IMR-90 (cell line): ENCODE measurements at regions of chr3 and their contacts with region 1.

Region 1: GRCh38 chr3:88058591-88059368 is at the starts of genes CGGBP1 and ZNF654:
- DNase-seq: peak; percentile 99
- ATAC-seq: peak; percentile 96
- H3K4me3 ChIP-seq: peak within 1 kb of the TSS; percentile 98
- H3K27ac ChIP-seq: peak within 1 kb of the TSS; percentile 99
- H3K4me1 ChIP-seq: 0 out of 2 replicates have a peak, but pooled peaks cover 1% of the 10 kb centered on the region
- H3K27me3 ChIP-seq: no peaks in the 10 kb centered on the region
- CTCF ChIP-seq: no peak
- POLR2A ChIP-seq: peak; percentile 90
- RAD21 ChIP-seq: no peak
- total RNA-seq, gene CGGBP1: 37.8 and 42.1 TPM in 2 replicates
- total RNA-seq, gene ZNF654: 11.5 and 21.1 TPM in 2 replicates

Region 2: DNA sequence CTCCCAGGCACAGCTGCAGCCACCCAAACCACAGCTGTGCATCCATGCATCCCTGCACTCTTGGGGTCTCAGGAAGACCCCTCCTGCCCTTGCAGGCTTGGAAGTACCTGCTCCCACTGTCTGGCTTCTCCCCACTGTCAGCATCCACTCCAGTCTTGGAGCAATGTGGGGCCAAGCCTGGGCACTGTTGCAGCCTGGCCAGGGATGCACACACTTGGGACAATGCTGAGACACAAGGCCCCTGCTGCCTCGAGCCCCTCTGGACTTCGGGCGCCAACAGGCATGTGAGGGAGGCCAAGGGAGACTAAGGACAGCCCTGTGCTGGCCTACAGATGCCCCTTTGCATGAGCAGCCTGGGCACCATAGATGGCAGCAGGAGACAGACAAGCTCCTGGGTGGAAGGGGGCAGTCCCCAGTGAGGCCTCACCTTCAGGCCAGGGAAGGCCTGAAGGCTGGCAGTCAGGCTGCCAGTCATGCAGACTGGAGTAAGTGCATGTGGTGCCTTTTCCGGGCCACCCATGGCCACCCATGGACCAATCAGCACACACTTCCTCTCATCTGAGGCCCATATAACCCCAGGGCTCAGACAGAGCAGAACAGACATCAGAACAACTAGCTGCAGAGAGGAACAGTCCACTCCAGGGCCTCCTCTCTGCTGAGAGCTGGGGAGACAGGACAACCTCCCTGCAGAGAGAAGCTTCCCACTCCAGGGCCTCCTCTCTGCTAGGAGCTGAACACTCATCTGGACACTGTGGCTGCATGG is 1286.9 kb before region 1 on chr3:
- CTCF ChIA-PET with region 1: no interaction called
- POLR2A ChIA-PET with region 1: no interaction called
- dilution Hi-C with region 1: no loop called
- in situ Hi-C with region 1: no loop called
- intact Hi-C with region 1: no loop called
- DNase-seq: no peak
- ATAC-seq: peak; percentile 49
- H3K4me3 ChIP-seq: no peak overlapping the region
- H3K27ac ChIP-seq: no peak overlapping the region
- H3K4me1 ChIP-seq: no peaks in the 10 kb centered on the region
- H3K27me3 ChIP-seq: peaks cover 2% of the 10 kb centered on the region
- CTCF ChIP-seq: no peak
- POLR2A ChIP-seq: no peak
- RAD21 ChIP-seq: no peak

Region 3: DNA sequence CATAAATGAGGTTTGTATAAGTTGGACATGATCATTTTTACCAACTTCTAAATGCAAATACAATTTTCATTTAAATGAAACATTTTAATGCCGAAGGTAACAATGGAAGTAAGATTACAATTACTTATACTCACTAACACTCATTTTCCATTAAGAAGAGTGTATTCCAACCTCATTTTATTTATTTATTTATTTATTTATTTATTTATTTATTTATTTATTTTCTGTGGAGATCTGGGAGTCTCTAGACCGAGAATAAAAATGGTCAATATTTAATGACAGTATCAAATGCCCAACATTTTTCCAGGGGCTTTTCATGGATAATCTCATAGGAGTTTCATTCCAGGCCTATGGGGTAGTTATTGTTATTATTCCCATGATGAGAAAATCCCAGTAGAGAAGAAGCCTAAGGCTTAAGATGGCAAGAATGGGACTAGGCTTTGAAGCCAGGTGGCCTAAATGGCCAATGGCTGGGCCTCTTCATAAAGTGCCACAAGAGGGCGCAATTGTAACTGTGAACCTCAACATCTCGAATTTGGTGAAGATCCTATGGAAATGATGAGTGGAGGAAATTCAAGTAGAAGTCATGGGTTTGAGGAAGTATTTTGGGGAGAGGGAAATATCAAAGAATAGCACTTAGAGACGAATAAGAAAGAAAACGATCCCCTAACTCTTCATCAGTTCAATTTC is 1089.1 kb before region 1 on chr3:
- CTCF ChIA-PET with region 1: no interaction called
- POLR2A ChIA-PET with region 1: no interaction called
- dilution Hi-C with region 1: no loop called
- in situ Hi-C with region 1: no loop called
- intact Hi-C with region 1: loop called (anchors 5 kb)
- DNase-seq: peak; percentile 61
- ATAC-seq: peak; percentile 19; the same call in 1 of the 2 replicates
- H3K4me3 ChIP-seq: no peak overlapping the region
- H3K27ac ChIP-seq: no peak overlapping the region
- H3K4me1 ChIP-seq: peaks cover 5% of the 10 kb centered on the region; the same call in 1 of the 2 replicates
- H3K27me3 ChIP-seq: no peaks in the 10 kb centered on the region
- CTCF ChIP-seq: peak; percentile 63
- POLR2A ChIP-seq: no peak
- RAD21 ChIP-seq: peak; percentile 66

Region 4: GRCh38 chr3:88003115-88003755 is 55.5 kb before region 1 on chr3:
- CTCF ChIA-PET with region 1: no interaction called
- POLR2A ChIA-PET with region 1: no interaction called
- dilution Hi-C with region 1: no loop called
- in situ Hi-C with region 1: no loop called
- intact Hi-C with region 1: loop called (anchors 2 kb)
- DNase-seq: peak; percentile 49
- ATAC-seq: peak; percentile 53
- H3K4me3 ChIP-seq: no peak overlapping the region
- H3K27ac ChIP-seq: no peak overlapping the region
- H3K4me1 ChIP-seq: no peaks in the 10 kb centered on the region
- H3K27me3 ChIP-seq: peaks cover 5% of the 10 kb centered on the region
- CTCF ChIP-seq: peak; percentile 75
- POLR2A ChIP-seq: no peak
- RAD21 ChIP-seq: peak; percentile 68

Region 5: GRCh38 chr3:88075072-88075471 is 16.3 kb after region 1 on chr3:
- CTCF ChIA-PET with region 1: interaction called, 3 read pairs
- POLR2A ChIA-PET with region 1: no interaction called
- dilution Hi-C with region 1: no loop called
- in situ Hi-C with region 1: no loop called
- intact Hi-C with region 1: loop called (anchors 2 kb)
- DNase-seq: no peak
- ATAC-seq: no peak
- H3K4me3 ChIP-seq: no peak overlapping the region
- H3K27ac ChIP-seq: no peak overlapping the region
- H3K4me1 ChIP-seq: peaks cover 3% of the 10 kb centered on the region; the same call in 1 of the 2 replicates
- H3K27me3 ChIP-seq: no peaks in the 10 kb centered on the region
- CTCF ChIP-seq: no peak
- POLR2A ChIP-seq: no peak
- RAD21 ChIP-seq: no peak

Region 6: GRCh38 chr3:88113311-88114162 is 54.8 kb after region 1 on chr3:
- CTCF ChIA-PET with region 1: interaction called, 3 read pairs
- POLR2A ChIA-PET with region 1: no interaction called
- dilution Hi-C with region 1: no loop called
- in situ Hi-C with region 1: no loop called
- intact Hi-C with region 1: loop called (anchors 5 kb)
- DNase-seq: peak; percentile 70
- ATAC-seq: peak; percentile 96
- H3K4me3 ChIP-seq: no peak overlapping the region
- H3K27ac ChIP-seq: no peak overlapping the region
- H3K4me1 ChIP-seq: no peaks in the 10 kb centered on the region
- H3K27me3 ChIP-seq: no peaks in the 10 kb centered on the region
- CTCF ChIP-seq: peak; percentile 74
- POLR2A ChIP-seq: no peak
- RAD21 ChIP-seq: peak; percentile 69

Region 7: DNA sequence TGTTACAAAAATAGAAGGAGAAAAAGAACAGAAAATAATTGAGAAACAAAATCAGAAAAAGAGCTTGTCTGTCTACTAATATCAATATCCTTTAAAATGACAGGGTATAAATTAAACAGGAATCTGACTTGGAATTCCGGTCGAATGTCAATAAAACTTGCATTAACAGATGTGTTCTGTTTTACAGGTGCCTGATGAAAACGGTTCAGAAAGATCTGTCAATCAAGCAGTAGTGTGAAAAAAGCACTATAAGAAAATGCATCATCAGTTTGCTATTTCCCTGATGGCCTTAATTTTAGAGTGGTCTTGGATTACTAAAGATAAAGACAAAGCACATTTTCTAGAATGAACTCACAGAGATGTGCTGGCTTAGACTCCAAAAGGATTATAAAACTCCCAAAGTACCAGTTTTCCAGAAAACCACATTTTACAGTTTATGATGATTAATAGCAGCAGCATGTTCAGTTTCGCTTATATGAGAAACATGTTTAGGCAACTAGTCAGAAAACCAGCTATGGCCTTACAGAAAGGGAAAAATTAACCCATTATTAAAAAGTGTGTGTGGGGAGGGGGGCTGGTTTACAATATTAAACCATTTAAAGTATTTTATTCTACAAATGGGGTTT is 82.8 kb after region 1 on chr3:
- CTCF ChIA-PET with region 1: no interaction called
- POLR2A ChIA-PET with region 1: no interaction called
- dilution Hi-C with region 1: no loop called
- in situ Hi-C with region 1: no loop called
- intact Hi-C with region 1: loop called (anchors 5 kb)
- DNase-seq: peak; percentile 77
- ATAC-seq: peak; percentile 59
- H3K4me3 ChIP-seq: no peak overlapping the region
- H3K27ac ChIP-seq: no peak overlapping the region
- H3K4me1 ChIP-seq: no peaks in the 10 kb centered on the region
- H3K27me3 ChIP-seq: no peaks in the 10 kb centered on the region
- CTCF ChIP-seq: no peak
- POLR2A ChIP-seq: no peak
- RAD21 ChIP-seq: no peak

Region 8: DNA sequence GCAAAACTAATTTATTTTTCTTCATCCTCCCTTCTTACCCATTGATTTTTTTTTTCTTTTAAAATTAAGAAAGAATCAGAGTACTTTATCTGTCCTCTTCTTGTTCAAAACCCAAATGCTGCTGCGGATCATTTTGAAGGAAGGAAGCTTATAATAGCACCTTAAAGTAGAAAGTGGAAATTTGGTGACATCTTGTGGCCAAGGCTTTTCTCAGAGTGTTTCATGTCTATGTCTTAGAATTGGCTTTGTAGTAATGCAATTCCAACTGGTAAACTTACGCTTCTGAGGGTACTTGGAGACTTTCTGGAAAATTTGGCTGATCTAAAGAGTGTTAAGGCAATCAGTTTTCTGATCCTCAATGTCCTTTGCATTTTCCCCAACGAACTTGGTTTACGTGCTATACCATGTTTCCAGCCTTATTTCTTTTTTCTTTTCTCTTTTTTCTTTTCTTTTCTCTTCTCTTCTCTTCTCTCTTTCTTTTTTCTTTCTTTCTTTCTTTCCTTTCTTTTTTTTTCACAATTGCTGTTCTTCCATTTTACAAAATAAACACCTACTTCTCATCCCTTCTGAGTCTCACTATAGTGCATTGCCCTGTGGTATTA is 121.7 kb after region 1 on chr3:
- CTCF ChIA-PET with region 1: no interaction called
- POLR2A ChIA-PET with region 1: no interaction called
- dilution Hi-C with region 1: no loop called
- in situ Hi-C with region 1: no loop called
- intact Hi-C with region 1: loop called (anchors 5 kb)
- DNase-seq: peak; percentile 58
- ATAC-seq: peak; percentile 75
- H3K4me3 ChIP-seq: no peak overlapping the region
- H3K27ac ChIP-seq: no peak overlapping the region
- H3K4me1 ChIP-seq: no peaks in the 10 kb centered on the region; the same call in 1 of the 2 replicates
- H3K27me3 ChIP-seq: no peaks in the 10 kb centered on the region
- CTCF ChIP-seq: peak; percentile 60
- POLR2A ChIP-seq: no peak
- RAD21 ChIP-seq: peak; percentile 71